Activated CD4-positive, alpha-beta T cell treated with anti-CD3 and anti-CD28 coated beads for 36 hours (primary cell): ENCODE measurements at regions of chr3 and their contacts with region 1.

Region 1: DNA sequence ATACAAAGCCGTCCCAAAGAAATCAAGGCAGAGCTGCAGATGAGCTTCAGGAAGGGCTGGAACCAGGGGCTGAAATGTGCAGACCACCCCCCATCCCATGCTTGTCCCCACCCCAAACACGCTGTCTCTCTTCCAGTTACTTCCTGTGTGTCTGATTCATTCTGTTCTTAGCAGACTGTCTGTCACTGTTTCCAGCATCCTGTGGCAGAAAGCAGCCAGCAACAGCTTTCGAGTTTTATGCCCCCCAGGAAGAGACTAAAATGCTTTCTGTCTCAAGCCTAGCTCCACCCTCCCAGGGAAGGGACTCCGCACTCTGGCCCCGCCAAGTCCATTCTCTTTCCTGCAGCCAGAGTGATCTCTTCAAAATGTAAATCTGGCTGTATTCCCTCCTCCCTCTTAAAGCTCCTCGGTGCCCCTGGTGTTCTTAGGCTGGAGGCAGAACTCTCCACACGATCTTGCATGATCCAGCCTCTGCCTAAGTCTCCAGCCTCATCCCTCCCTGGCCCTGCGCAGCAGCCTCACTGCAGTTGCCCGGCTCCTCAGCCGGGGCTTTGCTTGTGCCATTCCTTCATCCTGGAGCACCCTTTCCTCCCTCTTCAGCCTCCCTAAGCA is 41.5 kb downstream of the HRH1 start:
- DNase-seq: peak; percentile 64
- ATAC-seq: peak; percentile 87
- H3K4me3 Mint-ChIP-seq: peak overlapping the region; percentile 56
- H3K27ac Mint-ChIP-seq: peak overlapping the region; percentile 94
- H3K4me1 Mint-ChIP-seq: peaks cover 22% of the 10 kb centered on the region
- H3K27me3 Mint-ChIP-seq: peaks cover 13% of the 10 kb centered on the region

Region 2: DNA sequence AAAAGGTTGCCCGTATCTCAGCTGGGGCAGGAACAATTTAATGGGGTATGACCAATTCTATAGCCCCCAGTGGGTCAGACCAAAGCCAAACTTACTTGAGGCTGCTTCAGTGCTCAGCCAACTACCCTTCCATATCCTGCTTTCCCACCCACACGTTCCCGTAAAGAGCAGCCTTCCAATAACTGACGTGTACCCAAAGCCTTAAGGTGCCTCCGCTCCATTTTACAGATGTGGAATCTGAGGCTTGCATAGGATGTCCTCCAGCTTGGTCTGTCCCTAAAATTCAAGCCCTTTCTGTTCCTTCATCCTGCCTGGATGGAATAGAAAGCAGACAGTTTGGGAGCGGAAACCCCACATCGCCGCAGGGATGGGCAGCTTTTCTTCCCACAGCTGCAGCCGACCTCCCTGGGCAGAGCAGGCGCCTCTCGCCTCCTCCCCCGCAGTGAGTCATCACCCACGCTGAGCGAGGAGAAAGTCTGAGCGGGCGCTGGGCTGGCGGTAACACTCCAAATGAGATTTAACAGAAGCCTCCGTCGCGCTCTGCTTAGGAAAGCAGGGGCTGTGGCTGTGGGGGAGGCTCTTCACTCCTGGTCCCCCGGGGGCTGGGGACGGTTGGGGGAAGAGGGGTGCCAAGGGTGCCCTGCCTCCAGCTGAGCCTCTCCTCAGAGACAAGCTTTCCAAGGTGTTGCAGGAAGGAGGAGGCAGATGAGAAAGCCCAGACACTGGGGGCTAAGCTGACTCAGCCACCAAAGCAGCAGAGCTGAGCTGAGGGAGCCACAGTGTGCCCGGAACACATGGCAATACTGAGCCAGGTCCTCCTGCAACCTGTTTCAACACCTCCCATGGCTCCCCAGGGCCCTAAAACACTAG is 99.3 kb before region 1 on chr3:
- CTCF ChIA-PET with region 1: no interaction called
- POLR2A ChIA-PET with region 1: interaction called, 3 read pairs
- intact Hi-C with region 1: loop called in 1 of 2 experiments (anchors 1 kb)
- DNase-seq: peak; percentile 91
- ATAC-seq: peak; percentile 95
- H3K4me3 Mint-ChIP-seq: peak overlapping the region; percentile 61
- H3K27ac Mint-ChIP-seq: peak overlapping the region; percentile 60
- H3K4me1 Mint-ChIP-seq: peaks cover 18% of the 10 kb centered on the region
- H3K27me3 Mint-ChIP-seq: peaks cover 16% of the 10 kb centered on the region